Activated naive CD4-positive, alpha-beta T cell treated with anti-CD3 and anti-CD28 coated beads, Interleukin-2, amount 10 ng/mL, durations not matched to agents 7 days and 5 days (primary cell): ENCODE measurements at regions of chr15 and their contacts with region 1.

Region 1: DNA sequence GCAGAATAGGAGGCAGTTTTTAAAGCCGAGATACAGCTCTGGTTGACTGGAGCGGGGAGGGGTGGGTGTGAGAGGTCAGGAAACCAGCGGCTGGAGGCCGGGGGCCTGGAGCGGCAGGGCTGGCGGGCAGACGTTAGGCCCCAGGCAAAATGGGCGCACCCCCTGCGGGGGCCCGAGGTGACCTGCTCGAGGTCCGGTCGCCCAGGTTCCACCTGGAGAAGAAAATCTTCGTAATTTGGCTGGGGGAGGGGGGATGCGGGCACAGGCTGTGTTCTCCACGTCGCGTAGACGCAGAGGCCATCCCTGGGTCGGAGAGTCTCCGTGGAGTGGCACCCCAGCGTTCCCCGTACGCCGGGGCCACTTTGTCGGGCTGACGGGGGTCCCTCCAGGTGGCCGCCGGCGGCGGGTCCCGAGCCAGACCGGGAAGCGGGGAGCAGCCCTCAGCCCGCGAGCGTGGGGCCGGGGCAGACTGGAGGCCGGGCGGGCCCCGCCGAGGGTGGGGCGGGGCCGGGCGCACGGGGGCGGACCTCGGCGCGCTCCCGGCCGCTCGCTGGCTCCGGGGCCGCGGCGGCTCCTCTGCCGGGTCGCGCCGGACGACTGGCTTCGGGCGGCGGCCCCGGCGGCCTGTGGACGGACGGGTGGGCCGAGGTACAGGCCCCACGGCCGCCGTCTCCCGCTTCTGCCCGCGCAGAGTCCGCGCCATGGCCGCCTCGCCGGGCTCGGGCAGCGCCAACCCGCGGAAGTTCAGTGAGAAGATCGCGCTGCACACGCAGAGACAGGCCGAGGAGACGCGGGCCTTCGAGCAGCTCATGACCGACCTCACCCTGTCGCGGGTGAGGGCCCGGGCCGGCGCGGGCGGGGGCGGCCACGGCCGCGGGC is at the start of gene CRTC3:
- DNase-seq: peak; percentile 69
- H3K4me3 Mint-ChIP-seq: peak within 1 kb of the TSS; percentile 99
- H3K27ac Mint-ChIP-seq: peak within 1 kb of the TSS; percentile 91
- H3K4me1 Mint-ChIP-seq: peaks cover 47% of the 10 kb centered on the region
- H3K27me3 Mint-ChIP-seq: no peaks in the 10 kb centered on the region

Region 2: DNA sequence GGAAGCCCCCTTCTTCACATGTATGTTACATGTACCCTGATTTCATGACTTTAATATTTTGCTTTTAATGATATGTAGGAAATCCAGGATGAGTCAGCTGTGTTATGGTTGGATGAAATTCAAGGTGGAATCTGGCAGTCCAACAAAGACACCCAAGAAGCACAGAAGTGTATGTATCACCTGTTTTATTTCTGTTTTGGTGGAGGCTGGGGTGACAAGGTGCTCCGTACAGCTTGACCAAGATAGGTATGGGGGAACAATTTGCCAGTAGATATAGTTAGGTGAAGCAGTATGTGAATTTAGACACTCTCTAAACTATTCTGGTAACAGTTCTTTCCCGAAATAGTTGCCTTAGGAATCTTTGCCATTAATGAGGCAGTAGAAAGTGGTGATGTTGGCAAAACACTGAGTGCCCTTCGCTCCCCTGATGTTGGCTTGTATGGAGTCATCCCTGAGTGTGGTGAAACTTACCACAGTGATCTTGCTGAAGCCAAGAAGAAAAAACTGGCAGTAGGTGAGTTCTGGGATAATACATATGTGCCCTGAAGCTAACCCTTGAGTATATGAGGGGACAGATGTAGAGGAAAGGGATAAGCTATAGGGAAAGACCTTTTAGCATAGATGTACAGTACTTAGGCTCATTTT is 63.6 kb before region 1 on chr15:
- CTCF ChIA-PET with region 1: no interaction called
- DNase-seq: no peak
- H3K4me3 Mint-ChIP-seq: no peak overlapping the region
- H3K27ac Mint-ChIP-seq: no peak overlapping the region
- H3K4me1 Mint-ChIP-seq: peaks cover 15% of the 10 kb centered on the region
- H3K27me3 Mint-ChIP-seq: no peaks in the 10 kb centered on the region

Region 3: DNA sequence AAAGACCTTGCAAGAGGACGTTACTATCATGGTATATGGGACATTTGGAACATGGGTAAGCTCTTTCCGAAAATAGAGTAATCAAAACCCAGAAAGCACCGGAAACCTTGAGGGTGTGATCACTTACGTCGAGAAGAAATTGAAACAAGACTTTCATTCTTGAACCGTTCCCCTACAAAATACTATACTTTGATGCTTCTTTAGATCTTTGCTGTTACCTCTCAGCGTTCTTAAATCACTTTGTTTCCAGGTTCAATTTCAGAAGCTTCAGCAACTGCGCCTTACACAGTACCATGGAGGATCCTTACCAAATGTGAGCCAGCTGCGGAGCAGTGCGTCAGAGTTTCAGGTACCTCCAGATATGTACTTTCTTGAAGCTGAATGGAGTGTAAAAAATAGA is 10.2 kb after region 1 on chr15:
- CTCF ChIA-PET with region 1: interaction called, 13 read pairs
- DNase-seq: peak; percentile 65
- H3K4me3 Mint-ChIP-seq: peak overlapping the region; percentile 84
- H3K27ac Mint-ChIP-seq: peak overlapping the region; percentile 99
- H3K4me1 Mint-ChIP-seq: peaks cover 82% of the 10 kb centered on the region
- H3K27me3 Mint-ChIP-seq: no peaks in the 10 kb centered on the region